ENCODE measurements at regions of chr22 and their contacts with region 1.

Region 1: GRCh38 chr22:25014896-25015755 is 62.6 kb downstream of the KIAA1671 start:
- DNase-seq: no peak
- ATAC-seq: peak in 2 of 8 donors; percentile 37 to 42
- H3K4me3 ChIP-seq: no peak overlapping the region
- H3K27ac ChIP-seq: peak overlapping the region in 8 of 10 donors; percentile 14 to 77 (median 56)
- H3K4me1 ChIP-seq: peaks cover 0 to 77% (median 33%) of the 10 kb centered on the region in 9 donors
- H3K27me3 ChIP-seq: no peaks in the 10 kb centered on the region
- CTCF ChIP-seq: no peak

Region 2: GRCh38 chr22:24969560-24970301 is 45.4 kb before region 1 on chr22:
- intact Hi-C with region 1: loop called in 2 of 10 experiments (anchors 5 kb)
- DNase-seq: peak; percentile 56 to 85
- ATAC-seq: peak; percentile 79 to 93 (median 88)
- H3K4me3 ChIP-seq: peak overlapping the region in 2 of 10 donors; percentile 23 to 27
- H3K27ac ChIP-seq: peak overlapping the region; percentile 75 to 89 (median 81)
- H3K4me1 ChIP-seq: peaks cover 12 to 94% (median 61%) of the 10 kb centered on the region in 9 donors
- H3K27me3 ChIP-seq: no peaks in the 10 kb centered on the region
- CTCF ChIP-seq: no peak

Measured in heart right ventricle (tissue), 16 donors.